Activated CD4-positive, alpha-beta memory T cell treated with anti-CD3 and anti-CD28 coated beads, Interleukin-2, amount 10 ng/mL, durations not matched to agents 7 days and 5 days (primary cell): ENCODE measurements at regions of chr11 and their contacts with region 1.

Region 1: GRCh38 chr11:63553741-63554151 is 9.4 kb downstream of the PLAAT2 start:
- DNase-seq: peak; percentile 57
- H3K4me3 Mint-ChIP-seq: peak overlapping the region; percentile 46
- H3K27ac Mint-ChIP-seq: peak overlapping the region; percentile 90
- H3K4me1 Mint-ChIP-seq: peaks cover 39% of the 10 kb centered on the region
- H3K27me3 Mint-ChIP-seq: no peaks in the 10 kb centered on the region

Region 2: DNA sequence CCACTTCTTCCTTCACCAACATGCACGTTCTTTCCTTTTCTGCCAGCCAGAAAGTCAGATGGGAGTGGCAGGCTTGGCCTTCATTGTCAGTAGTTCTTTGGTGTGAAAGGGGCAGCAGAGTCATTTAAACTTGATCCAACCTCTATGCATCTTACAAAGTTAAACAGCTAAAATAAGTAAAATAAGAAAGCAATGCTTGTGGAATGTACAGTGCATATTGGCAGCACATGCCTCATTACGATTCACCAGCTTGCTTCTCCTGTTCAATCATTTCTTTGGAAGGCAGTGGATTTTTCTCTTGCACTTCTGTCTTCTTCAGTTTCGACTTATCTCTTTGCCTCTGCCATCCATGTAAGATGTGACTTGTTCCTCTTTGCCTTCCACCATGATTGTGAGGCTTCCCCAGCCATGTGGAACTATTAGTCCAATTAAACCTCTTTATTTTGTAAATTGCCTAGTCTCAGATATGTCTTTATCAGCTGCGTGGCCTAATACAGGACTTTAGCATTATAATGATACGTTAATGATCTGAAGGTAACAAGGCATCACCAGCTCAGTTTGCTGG is 33.1 kb before region 1 on chr11:
- CTCF ChIA-PET with region 1: no interaction called
- POLR2A ChIA-PET with region 1: no interaction called
- DNase-seq: no peak
- H3K4me3 Mint-ChIP-seq: no peak overlapping the region
- H3K27ac Mint-ChIP-seq: no peak overlapping the region
- H3K4me1 Mint-ChIP-seq: peaks cover 17% of the 10 kb centered on the region
- H3K27me3 Mint-ChIP-seq: peaks cover 5% of the 10 kb centered on the region

Region 3: GRCh38 chr11:63567044-63567840 is 13.5 kb after region 1 on chr11:
- CTCF ChIA-PET with region 1: interaction called, 6 read pairs
- POLR2A ChIA-PET with region 1: interaction called, 26 read pairs
- DNase-seq: peak; percentile 72
- H3K4me3 Mint-ChIP-seq: peak overlapping the region; percentile 44
- H3K27ac Mint-ChIP-seq: peak overlapping the region; percentile 78
- H3K4me1 Mint-ChIP-seq: peaks cover 49% of the 10 kb centered on the region
- H3K27me3 Mint-ChIP-seq: peaks cover 5% of the 10 kb centered on the region

Region 4: GRCh38 chr11:63621931-63622782 is 68.4 kb after region 1 on chr11:
- CTCF ChIA-PET with region 1: no interaction called
- POLR2A ChIA-PET with region 1: no interaction called
- DNase-seq: no peak
- H3K4me3 Mint-ChIP-seq: no peak overlapping the region
- H3K27ac Mint-ChIP-seq: no peak overlapping the region
- H3K4me1 Mint-ChIP-seq: peaks cover 6% of the 10 kb centered on the region
- H3K27me3 Mint-ChIP-seq: no peaks in the 10 kb centered on the region

Region 5: DNA sequence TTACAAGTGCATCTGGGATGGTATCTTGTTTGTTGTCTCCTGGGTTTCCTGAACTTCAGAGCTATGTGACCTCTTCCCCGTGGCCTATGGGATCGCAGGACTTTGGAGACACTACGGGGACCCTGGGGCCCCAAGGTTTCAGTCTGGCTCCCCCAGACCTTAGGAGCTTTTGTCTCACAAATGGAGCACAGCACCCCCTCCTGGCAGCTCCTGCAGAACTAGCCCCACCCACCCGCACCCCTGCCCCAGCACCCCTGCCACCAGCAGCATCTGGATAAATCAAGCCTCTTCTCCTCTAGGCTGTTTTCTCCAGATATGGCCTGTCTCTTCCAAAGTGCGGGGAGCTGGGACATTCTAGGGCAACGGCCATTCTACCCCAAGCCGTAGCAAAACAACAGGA is 352.8 kb after region 1 on chr11:
- CTCF ChIA-PET with region 1: no interaction called
- POLR2A ChIA-PET with region 1: no interaction called
- DNase-seq: peak; percentile 53
- H3K4me3 Mint-ChIP-seq: no peak overlapping the region
- H3K27ac Mint-ChIP-seq: no peak overlapping the region
- H3K4me1 Mint-ChIP-seq: no peaks in the 10 kb centered on the region
- H3K27me3 Mint-ChIP-seq: no peaks in the 10 kb centered on the region

Region 6: DNA sequence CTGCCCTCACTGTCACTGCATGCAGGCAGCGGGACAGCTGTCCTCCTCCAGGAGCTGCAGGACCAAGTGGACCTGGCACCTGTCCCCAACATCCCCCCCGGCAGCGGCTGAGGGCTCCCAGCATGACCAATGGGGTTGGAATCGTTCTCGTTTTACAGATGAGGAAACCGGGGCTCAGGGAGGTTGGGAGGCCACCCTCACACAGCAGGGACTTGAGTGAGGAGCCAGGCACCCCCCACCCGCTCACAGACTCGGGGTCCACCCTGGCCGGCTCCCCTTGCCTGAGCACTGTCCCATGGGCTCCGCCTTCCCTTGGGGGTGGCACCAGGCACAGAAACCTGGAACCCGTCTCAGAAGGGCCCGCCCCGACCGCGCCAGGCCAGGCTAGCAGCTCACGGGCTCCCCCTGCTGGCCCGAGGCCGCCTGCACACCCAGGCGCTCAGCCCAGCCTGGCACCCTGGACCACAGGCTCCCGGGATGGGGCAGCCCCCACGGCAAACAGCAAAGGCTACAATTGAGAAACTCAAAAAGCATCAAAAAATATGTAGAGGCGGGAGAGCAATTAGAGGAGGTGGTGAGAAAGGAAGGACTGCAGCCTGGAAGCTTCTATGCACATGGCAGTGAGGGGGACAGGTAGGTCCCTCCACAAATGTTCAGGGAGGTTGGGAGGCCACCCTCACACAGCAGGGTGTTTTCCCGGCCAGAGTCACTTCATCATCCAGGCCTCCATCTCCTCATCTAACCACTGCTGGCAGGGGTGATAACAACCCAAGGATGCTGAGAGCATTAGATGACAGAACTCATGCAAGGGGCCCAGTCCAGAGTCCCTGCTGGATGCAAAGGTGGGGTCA is 599.3 kb after region 1 on chr11:
- CTCF ChIA-PET with region 1: no interaction called
- POLR2A ChIA-PET with region 1: no interaction called
- DNase-seq: peak; percentile 76
- H3K4me3 Mint-ChIP-seq: no peak overlapping the region
- H3K27ac Mint-ChIP-seq: no peak overlapping the region
- H3K4me1 Mint-ChIP-seq: no peaks in the 10 kb centered on the region
- H3K27me3 Mint-ChIP-seq: peaks cover 3% of the 10 kb centered on the region